PC-9 (cell line): ENCODE measurements at regions of chr7 and their contacts with region 1.

Region 1: DNA sequence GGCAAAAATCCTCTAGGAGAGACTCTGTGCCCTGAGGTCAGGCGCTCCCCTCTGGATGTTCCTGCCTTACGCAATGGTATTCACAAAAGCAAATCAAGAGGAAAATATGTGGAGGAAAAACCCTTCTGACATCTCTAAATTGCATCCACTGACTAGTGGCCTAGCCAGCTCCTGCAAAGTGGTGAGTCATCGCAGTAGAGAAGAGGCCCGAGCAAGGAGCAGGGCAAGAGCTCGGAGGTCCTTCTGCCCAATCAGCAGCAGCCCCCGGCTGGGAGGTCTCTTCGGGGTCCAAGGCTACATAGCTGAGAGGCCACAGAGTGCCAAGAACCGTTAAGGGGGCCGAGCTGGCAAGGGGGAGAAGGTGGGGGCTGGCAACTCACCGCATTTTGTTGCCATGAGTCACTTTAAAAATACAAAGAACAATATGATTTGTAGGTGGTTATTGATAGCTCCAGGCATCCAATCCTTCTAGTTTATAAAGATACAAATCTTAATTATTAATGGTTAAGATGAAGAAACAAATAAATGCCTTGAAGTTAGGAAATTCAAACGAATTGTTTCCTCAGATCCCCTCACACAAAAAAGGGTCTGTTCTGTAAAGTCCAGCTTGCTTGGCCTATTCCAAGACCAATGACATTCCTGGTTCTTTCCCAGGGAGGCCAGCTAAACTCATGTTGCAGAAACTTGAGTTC is 161.6 kb downstream of the PKD1L1 start:
- DNase-seq: peak; percentile 99 to 100
- H3K4me3 ChIP-seq: peak overlapping the region; percentile 20
- H3K27ac ChIP-seq: peak overlapping the region; percentile 93
- H3K4me1 ChIP-seq: peaks cover 77% of the 10 kb centered on the region
- H3K27me3 ChIP-seq: no peaks in the 10 kb centered on the region
- CTCF ChIP-seq: no peak

Region 2: DNA sequence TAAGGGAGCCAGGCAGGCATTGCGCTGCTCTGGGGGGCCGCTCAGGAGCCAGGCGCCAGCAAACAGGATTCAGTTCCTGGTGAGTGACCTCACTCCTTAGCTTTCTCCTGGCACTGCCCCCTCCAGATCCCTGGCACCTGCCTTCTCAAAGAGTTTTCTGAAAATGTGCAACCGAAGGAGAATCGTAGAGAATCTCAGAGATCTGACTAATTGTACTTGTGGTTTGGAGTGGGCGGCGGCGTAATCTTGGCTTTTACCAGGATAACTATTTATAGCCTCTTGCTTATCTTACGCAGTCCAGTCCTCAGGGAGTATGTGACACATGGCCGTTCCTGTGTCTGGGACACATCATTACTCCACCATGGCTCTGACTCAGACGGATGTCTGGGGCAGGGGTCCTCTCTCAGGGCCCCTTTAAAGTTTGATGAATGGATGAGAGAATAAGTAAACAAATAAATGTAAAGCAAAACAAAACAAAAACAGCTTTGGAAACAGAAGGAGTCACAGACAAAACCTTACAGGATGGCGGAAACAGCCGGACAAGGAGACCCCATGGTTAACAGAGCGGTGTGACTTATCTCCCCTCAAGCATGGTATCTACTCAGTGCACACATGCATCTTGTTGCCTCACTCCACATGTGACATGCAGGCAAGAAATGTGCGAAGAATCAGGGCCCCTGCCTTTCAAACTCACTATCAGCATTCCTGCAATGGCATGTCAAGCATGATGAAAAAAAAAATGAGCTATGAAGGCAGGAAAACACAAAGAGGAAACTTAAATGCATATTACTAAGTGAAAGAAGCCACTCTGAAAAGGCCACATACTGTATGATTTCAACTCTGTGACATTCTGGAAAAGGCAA is 304.5 kb before region 1 on chr7:
- CTCF ChIA-PET with region 1: no interaction called
- POLR2A ChIA-PET with region 1: interaction called, 5 read pairs
- intact Hi-C with region 1: loop called (anchors 1 kb)
- DNase-seq: peak; percentile 82 to 99
- H3K4me3 ChIP-seq: peak overlapping the region; percentile 15; the same call in 1 of the 2 replicates
- H3K27ac ChIP-seq: peak overlapping the region; percentile 90
- H3K4me1 ChIP-seq: peaks cover 85% of the 10 kb centered on the region
- H3K27me3 ChIP-seq: no peaks in the 10 kb centered on the region
- CTCF ChIP-seq: no peak

Region 3: DNA sequence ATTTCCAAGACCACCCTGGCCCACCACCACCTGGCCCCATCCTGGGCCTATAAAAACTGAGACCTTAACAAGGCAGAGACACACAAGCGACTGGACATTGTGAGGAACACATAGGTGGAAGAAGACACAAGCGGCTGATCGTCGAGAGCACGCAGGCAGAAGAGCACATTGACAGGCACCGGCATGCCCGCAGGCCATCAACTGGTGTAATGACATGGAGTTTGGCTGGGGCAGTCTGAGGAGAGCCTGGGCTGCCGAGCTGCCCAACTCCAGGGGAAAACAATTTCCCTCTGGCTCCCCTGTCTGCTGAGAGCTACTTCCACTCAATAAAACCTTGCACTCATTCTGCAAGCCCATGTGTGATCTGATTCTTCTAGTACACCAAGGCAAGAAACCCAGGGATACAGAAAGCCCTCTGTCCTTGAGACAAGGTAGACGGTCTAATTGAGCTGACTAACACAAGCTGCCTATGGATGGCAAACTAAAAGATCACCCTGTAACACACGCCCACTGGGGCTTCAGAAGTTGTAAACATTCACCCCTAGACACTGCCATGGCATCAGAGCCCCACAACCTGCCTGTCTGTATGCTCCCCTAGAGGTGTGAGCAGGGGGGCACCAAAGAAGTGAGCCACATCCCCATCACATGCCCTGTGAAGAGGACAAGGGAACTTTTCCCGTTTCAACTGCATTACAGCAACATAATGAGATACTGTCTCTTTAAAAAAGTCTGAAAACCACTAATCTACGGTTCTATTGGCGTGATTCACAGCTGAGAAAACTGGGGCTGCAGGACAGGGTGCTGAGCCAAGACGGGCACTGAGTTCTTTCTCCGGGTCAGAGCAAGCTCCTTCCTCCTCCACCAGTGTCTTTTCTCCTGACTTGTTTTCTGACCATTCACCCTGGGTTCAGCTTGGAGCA is 186.2 kb before region 1 on chr7:
- CTCF ChIA-PET with region 1: no interaction called
- POLR2A ChIA-PET with region 1: no interaction called
- intact Hi-C with region 1: loop called (anchors 1 kb)
- DNase-seq: peak; percentile 70 to 88
- H3K4me3 ChIP-seq: peak overlapping the region; percentile 38; the same call in 1 of the 2 replicates
- H3K27ac ChIP-seq: peak overlapping the region; percentile 98
- H3K4me1 ChIP-seq: peaks cover 68% of the 10 kb centered on the region
- H3K27me3 ChIP-seq: no peaks in the 10 kb centered on the region
- CTCF ChIP-seq: no peak

Region 4: DNA sequence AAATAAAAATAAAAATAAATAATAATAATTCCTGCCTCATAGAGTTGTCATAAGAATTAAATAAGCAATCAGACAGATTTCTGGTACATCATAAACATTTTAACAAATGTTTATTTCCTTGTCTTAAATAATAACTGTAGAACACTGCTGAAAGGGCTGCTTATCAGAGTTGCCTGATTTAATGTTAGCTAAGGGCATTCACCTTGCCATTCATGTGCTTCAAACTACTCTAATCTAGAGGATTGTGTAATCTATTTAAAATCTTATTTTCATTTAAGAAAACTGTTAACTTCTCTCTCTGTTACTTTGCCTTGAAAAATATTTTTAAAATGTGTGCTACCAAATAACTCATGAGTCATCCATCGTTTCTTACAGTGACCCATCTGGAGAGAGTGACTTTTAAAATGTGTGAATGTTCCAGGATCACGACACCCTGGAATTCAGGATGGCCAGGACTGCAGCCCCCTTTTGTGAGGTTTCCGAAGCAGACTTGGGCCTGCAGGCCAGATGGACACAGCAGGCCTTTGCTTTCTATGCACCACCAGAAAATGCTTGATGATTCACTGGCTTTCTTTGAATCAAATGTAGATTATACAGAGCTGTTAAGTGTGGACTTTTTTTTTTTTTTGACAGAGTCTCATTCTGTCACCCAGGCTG is 95.7 kb before region 1 on chr7:
- CTCF ChIA-PET with region 1: no interaction called
- POLR2A ChIA-PET with region 1: interaction called, 3 read pairs
- intact Hi-C with region 1: loop called (anchors 2 kb)
- DNase-seq: peak; percentile 23 to 65
- H3K4me3 ChIP-seq: no peak overlapping the region
- H3K27ac ChIP-seq: peak overlapping the region; percentile 78
- H3K4me1 ChIP-seq: peaks cover 51% of the 10 kb centered on the region
- H3K27me3 ChIP-seq: no peaks in the 10 kb centered on the region
- CTCF ChIP-seq: no peak

Region 5: DNA sequence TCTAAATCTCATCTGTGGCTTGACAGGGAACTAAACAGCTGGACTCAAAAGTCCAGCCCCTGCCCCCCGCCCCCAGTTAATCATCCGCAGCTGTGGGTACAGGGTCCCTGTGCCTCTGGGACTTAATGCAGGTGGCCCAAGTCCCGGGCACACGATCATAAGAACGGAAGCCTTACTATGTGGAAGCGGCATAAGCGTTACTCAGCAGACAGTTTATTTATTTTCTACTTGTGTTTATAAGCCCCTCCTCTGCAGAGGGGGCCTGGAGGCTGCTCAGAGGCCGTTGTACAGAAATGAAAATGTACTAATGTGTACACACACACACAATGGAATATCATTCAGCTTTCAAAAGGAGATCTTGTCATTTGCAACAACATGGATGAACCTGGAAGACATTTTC is 46.8 kb before region 1 on chr7:
- CTCF ChIA-PET with region 1: no interaction called
- POLR2A ChIA-PET with region 1: interaction called, 20 read pairs
- intact Hi-C with region 1: no loop called
- DNase-seq: no peak
- H3K4me3 ChIP-seq: no peak overlapping the region
- H3K27ac ChIP-seq: no peak overlapping the region
- H3K4me1 ChIP-seq: no peaks in the 10 kb centered on the region
- H3K27me3 ChIP-seq: no peaks in the 10 kb centered on the region
- CTCF ChIP-seq: no peak

Region 6: GRCh38 chr7:48088559-48089045 is 301.9 kb after region 1 on chr7:
- CTCF ChIA-PET with region 1: no interaction called
- POLR2A ChIA-PET with region 1: interaction called, 8 read pairs
- intact Hi-C with region 1: loop called (anchors 2 kb)
- DNase-seq: peak; percentile 93
- H3K4me3 ChIP-seq: peak overlapping the region; percentile 73
- H3K27ac ChIP-seq: peak overlapping the region; percentile 98
- H3K4me1 ChIP-seq: peaks cover 76% of the 10 kb centered on the region
- H3K27me3 ChIP-seq: no peaks in the 10 kb centered on the region
- CTCF ChIP-seq: no peak